ENCODE measurements at regions of chr4 and their contacts with region 1.

Region 1: GRCh38 chr4:59570860-59571476 is 1629.2 kb upstream of the ADGRL3 start:
- DNase-seq: no peak
- H3K4me3 Mint-ChIP-seq: no peak overlapping the region
- H3K27ac Mint-ChIP-seq: no peak overlapping the region
- H3K4me1 Mint-ChIP-seq: no peaks in the 10 kb centered on the region
- H3K27me3 Mint-ChIP-seq: no peaks in the 10 kb centered on the region

Region 2: DNA sequence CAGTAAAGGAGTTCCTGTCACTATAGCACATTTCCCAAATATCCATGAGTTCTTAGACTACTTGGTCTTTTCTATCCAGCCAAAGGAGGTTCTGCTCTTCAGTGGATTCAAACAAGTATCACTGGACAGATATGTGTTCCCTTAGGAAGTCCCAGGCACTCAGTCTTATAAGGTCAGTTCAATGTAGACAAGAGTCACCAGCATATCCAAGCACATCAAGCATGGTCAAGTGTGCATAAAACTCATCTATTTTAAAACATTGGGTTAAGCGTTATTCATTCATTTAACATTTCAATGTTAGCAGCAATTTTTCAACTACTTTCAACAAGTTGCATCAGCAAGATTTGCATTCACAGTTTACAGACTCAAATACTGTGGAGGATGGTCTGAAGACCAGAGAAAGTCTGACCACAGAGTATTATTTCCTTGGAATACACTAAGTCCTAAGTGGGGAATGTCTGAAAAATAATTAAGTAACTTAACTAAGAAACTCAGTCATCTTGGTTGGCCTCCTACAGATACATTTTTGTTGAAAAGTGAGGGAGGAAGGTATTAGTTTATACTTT is 1830.3 kb before region 1 on chr4:
- intact Hi-C with region 1: no loop called
- DNase-seq: no peak
- H3K4me3 Mint-ChIP-seq: no peak overlapping the region
- H3K27ac Mint-ChIP-seq: no peak overlapping the region
- H3K4me1 Mint-ChIP-seq: no peaks in the 10 kb centered on the region
- H3K27me3 Mint-ChIP-seq: no peaks in the 10 kb centered on the region

Region 3: GRCh38 chr4:59503731-59504130 is 67.2 kb before region 1 on chr4:
- intact Hi-C with region 1: no loop called
- DNase-seq: no peak
- H3K4me3 Mint-ChIP-seq: no peak overlapping the region
- H3K27ac Mint-ChIP-seq: no peak overlapping the region
- H3K4me1 Mint-ChIP-seq: no peaks in the 10 kb centered on the region
- H3K27me3 Mint-ChIP-seq: no peaks in the 10 kb centered on the region

Region 4: DNA sequence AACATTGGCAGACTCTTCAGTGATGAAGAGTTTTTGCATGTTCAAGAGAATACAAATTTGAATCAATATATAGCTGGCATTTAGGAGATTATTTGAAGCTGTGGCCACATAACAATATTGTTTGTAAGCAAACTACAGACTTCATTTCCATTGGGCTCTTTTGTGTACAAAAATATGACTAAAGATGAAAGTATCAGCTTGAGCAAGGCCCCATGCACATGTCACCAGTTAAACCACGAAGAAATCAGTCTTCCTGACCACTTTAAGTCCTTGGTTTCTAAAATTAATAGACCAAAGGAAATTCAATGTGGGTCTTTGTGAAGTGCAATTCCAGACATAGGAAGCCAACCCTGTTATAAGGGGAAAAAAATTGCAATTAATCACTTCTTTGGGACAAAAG is 35.4 kb before region 1 on chr4:
- intact Hi-C with region 1: loop called (anchors 5 kb)
- DNase-seq: no peak
- H3K4me3 Mint-ChIP-seq: no peak overlapping the region
- H3K27ac Mint-ChIP-seq: no peak overlapping the region
- H3K4me1 Mint-ChIP-seq: no peaks in the 10 kb centered on the region
- H3K27me3 Mint-ChIP-seq: no peaks in the 10 kb centered on the region

Region 5: DNA sequence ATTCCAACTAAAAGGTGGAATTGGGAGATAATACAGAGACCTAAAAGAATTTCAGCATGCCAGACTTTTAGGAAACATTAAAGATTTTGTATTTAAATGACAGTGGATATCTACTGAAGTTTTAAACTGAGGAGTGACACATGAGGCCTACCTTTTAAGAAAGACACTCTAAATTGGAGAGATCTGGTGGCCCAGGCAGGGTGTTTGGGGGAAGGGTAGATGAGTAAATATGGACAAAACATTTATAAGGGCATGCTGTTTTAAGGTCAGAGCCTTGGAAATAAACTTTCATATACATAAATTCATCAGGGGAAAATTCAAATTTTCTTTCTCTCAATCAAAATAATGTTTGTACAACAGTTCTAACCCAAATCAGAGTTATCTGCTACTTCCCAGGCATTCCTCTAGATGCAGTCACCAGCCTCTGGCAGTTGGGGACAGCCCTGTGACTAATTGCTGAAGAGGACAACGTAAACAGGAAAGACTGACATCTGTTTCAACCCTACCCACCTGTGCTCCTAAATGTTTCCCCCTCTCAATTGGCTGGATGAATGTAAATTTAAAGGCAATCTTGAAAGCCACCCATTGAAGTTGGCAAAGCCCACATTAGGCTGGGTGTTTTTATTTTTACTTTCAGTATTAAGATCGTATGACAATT is 17.8 kb before region 1 on chr4:
- intact Hi-C with region 1: loop called (anchors 1 kb)
- DNase-seq: no peak
- H3K4me3 Mint-ChIP-seq: no peak overlapping the region
- H3K27ac Mint-ChIP-seq: peak overlapping the region; percentile 34
- H3K4me1 Mint-ChIP-seq: no peaks in the 10 kb centered on the region
- H3K27me3 Mint-ChIP-seq: no peaks in the 10 kb centered on the region

Region 6: DNA sequence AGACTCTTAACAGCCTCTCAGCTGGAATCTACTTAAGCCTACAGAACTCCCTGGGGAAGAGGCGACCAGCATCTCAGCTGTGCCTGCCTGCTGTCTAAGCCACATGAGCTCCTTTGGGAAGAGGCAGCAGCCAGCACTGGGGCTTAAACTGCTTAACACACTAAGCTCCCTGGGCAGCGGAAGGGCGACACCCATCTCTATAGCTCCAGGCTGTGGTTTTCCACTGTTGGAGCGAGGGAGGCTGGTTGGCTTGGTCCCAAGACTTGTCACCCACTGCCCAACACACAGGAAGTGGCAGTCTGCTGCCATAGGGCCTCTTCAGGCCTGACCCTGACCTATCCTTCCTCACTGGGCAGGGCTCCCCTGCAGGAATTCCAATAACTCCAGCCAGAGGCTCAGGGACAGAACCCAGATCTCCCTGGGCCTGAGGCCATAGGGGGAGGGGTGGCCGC is 85.1 kb after region 1 on chr4:
- intact Hi-C with region 1: no loop called
- DNase-seq: no peak
- H3K4me3 Mint-ChIP-seq: no peak overlapping the region
- H3K27ac Mint-ChIP-seq: no peak overlapping the region
- H3K4me1 Mint-ChIP-seq: no peaks in the 10 kb centered on the region
- H3K27me3 Mint-ChIP-seq: no peaks in the 10 kb centered on the region

Measured in activated CD4-positive, alpha-beta T cell treated with anti-CD3 and anti-CD28 coated beads, Interleukin-2, amount 10 ng/mL, durations not matched to agents 24 days and 14 days (primary cell).